Naive thymus-derived CD4-positive, alpha-beta T cell (primary cell): ENCODE measurements at regions of chr11 and their contacts with region 1.

Region 1: DNA sequence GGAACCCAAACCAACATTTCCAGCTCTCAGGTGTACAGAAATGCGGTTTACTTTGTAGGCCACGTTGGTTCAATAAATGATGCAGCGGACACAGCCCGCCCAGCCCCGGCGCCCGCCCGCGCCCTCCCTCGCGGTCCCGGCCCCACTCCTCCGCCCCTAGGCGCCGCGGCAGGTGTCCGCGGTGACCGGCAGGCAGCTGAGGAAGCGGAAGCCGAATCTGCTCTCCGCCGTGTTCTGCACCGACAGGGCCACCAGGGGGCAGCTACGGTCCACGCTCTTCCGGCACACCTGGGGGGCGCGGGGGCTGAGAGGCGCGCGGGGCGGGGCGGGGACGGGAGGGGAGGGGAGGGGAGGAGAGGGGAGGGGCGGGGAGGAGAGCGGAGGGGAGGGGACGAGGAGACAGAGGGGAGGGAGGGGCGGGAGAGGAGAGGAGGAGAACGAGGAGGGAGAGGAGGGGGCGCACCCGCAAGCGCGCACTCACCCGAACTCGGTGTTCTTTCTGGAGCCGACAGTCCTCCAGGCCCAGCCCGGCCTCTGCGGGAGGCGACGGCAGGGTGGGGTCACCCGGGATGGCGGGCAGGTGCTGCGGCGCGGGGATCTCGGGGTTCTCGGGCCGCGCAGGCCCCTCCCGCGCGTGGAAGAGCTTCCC is 5.6 kb downstream of the LMNTD2 start:
- DNase-seq: peak; percentile 60 to 80 (median 72)
- ATAC-seq: peak; percentile 89
- H3K4me3 ChIP-seq: peak overlapping the region; percentile 46
- H3K4me3 Mint-ChIP-seq: peak overlapping the region in 7 of 10 donors; percentile 36 to 69 (median 57)
- H3K27ac ChIP-seq: peak overlapping the region; percentile 44
- H3K27ac Mint-ChIP-seq: no peak overlapping the region
- H3K4me1 ChIP-seq: peaks cover 9 to 16% of the 10 kb centered on the region in 2 donors
- H3K4me1 Mint-ChIP-seq: peaks cover 3 to 8% (median 7%) of the 10 kb centered on the region in 7 donors
- H3K27me3 ChIP-seq: no peaks in the 10 kb centered on the region
- H3K27me3 Mint-ChIP-seq: peaks cover 0 to 18% (median 0%) of the 10 kb centered on the region in 5 donors

Region 2: GRCh38 chr11:269146-269890 is 285.6 kb before region 1 on chr11:
- CTCF ChIA-PET with region 1: no interaction called
- POLR2A ChIA-PET with region 1: no interaction called
- intact Hi-C with region 1: no loop called
- DNase-seq: peak; percentile 43 to 95 (median 88)
- ATAC-seq: peak; percentile 84
- H3K4me3 ChIP-seq: peak overlapping the region; percentile 59
- H3K4me3 Mint-ChIP-seq: peak overlapping the region; percentile 85 to 96 (median 90)
- H3K27ac ChIP-seq: peak overlapping the region; percentile 80
- H3K27ac Mint-ChIP-seq: peak overlapping the region; percentile 92 to 100 (median 99)
- H3K4me1 ChIP-seq: peaks cover 24 to 26% of the 10 kb centered on the region in 2 donors
- H3K4me1 Mint-ChIP-seq: peaks cover 20 to 47% (median 35%) of the 10 kb centered on the region in 7 donors
- H3K27me3 ChIP-seq: no peaks in the 10 kb centered on the region
- H3K27me3 Mint-ChIP-seq: peaks cover 0 to 8% (median 0%) of the 10 kb centered on the region in 5 donors

Region 3: GRCh38 chr11:568306-569157 is 13.6 kb after region 1 on chr11:
- CTCF ChIA-PET with region 1: interaction called, 3 read pairs
- POLR2A ChIA-PET with region 1: interaction called, 17 read pairs
- intact Hi-C with region 1: loop called (anchors 1 kb)
- DNase-seq: peak; percentile 87 to 99 (median 95)
- ATAC-seq: peak; percentile 95
- H3K4me3 ChIP-seq: peak overlapping the region; percentile 73
- H3K4me3 Mint-ChIP-seq: peak overlapping the region; percentile 69 to 84 (median 77)
- H3K27ac ChIP-seq: peak overlapping the region; percentile 65
- H3K27ac Mint-ChIP-seq: peak overlapping the region in 3 of 9 donors; percentile 40 to 82 (median 68)
- H3K4me1 ChIP-seq: peaks cover 6 to 8% of the 10 kb centered on the region in 2 donors
- H3K4me1 Mint-ChIP-seq: peaks cover 0 to 16% (median 3%) of the 10 kb centered on the region in 7 donors
- H3K27me3 ChIP-seq: no peaks in the 10 kb centered on the region
- H3K27me3 Mint-ChIP-seq: no peaks in the 10 kb centered on the region

Region 4: GRCh38 chr11:587978-588380 is 33.0 kb after region 1 on chr11:
- CTCF ChIA-PET with region 1: interaction called, 3 read pairs
- POLR2A ChIA-PET with region 1: interaction called, 5 read pairs
- intact Hi-C with region 1: loop called in 1 of 2 experiments (anchors 1 kb)
- DNase-seq: peak; percentile 34 to 91 (median 78)
- ATAC-seq: peak; percentile 93
- H3K4me3 ChIP-seq: peak overlapping the region; percentile 16
- H3K4me3 Mint-ChIP-seq: peak overlapping the region; percentile 63 to 90 (median 76)
- H3K27ac ChIP-seq: peak overlapping the region; percentile 65
- H3K27ac Mint-ChIP-seq: peak overlapping the region; percentile 95 to 100 (median 99)
- H3K4me1 ChIP-seq: peaks cover 10 to 12% of the 10 kb centered on the region in 2 donors
- H3K4me1 Mint-ChIP-seq: peaks cover 9 to 38% (median 29%) of the 10 kb centered on the region in 7 donors
- H3K27me3 ChIP-seq: no peaks in the 10 kb centered on the region
- H3K27me3 Mint-ChIP-seq: no peaks in the 10 kb centered on the region

Region 5: GRCh38 chr11:615504-616319 is 60.8 kb after region 1 on chr11 and contains the start of gene IRF7:
- CTCF ChIA-PET with region 1: no interaction called
- POLR2A ChIA-PET with region 1: interaction called, 3 read pairs
- intact Hi-C with region 1: loop called (anchors 1 to 2 kb)
- DNase-seq: peak; percentile 70 to 91 (median 76)
- ATAC-seq: peak; percentile 91
- H3K4me3 ChIP-seq: peak within 1 kb of the TSS; percentile 97
- H3K4me3 Mint-ChIP-seq: peak within 1 kb of the TSS; percentile 80 to 94 (median 92)
- H3K27ac ChIP-seq: peak within 1 kb of the TSS; percentile 95
- H3K27ac Mint-ChIP-seq: peak within 1 kb of the TSS; percentile 83 to 97 (median 93)
- H3K4me1 ChIP-seq: peaks cover 8 to 22% of the 10 kb centered on the region in 2 donors
- H3K4me1 Mint-ChIP-seq: peaks cover 0 to 22% (median 15%) of the 10 kb centered on the region in 7 donors
- H3K27me3 ChIP-seq: no peaks in the 10 kb centered on the region
- H3K27me3 Mint-ChIP-seq: no peaks in the 10 kb centered on the region
- total RNA-seq, gene IRF7: 57.0 to 134 (median 64.6) TPM

Region 6: DNA sequence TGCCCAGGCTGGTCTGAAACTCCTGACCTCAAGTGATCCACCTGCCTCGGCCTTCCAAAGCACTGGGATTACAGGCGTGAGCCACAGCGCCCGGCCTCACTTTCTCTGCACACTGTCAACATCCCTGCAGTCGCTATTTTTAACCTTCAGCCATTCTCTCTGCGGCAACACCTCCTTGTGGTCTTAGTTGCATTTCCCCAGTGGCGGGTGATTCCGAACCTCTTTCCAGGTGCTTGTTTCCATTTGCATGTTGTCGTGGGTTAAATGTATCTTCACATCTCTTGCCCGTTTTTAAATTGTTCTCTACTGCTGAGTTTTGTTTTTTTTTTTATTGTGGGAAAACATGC is 74.3 kb after region 1 on chr11:
- CTCF ChIA-PET with region 1: interaction called, 5 read pairs
- POLR2A ChIA-PET with region 1: interaction called, 3 read pairs
- intact Hi-C with region 1: loop called in 1 of 2 experiments (anchors 1 kb)
- DNase-seq: peak in 1 of 9 donors; percentile 17
- ATAC-seq: peak; percentile 48
- H3K4me3 ChIP-seq: no peak overlapping the region
- H3K4me3 Mint-ChIP-seq: peak overlapping the region; percentile 26 to 72 (median 56)
- H3K27ac ChIP-seq: no peak overlapping the region
- H3K27ac Mint-ChIP-seq: peak overlapping the region in 3 of 9 donors; percentile 11 to 34 (median 14)
- H3K4me1 ChIP-seq: peaks cover 0 to 7% of the 10 kb centered on the region in 2 donors
- H3K4me1 Mint-ChIP-seq: peaks cover 17 to 23% (median 20%) of the 10 kb centered on the region in 7 donors
- H3K27me3 ChIP-seq: no peaks in the 10 kb centered on the region
- H3K27me3 Mint-ChIP-seq: peaks cover 21 to 23% (median 22%) of the 10 kb centered on the region in 5 donors

Region 7: GRCh38 chr11:765025-765801 is 210.3 kb after region 1 on chr11:
- CTCF ChIA-PET with region 1: no interaction called
- POLR2A ChIA-PET with region 1: interaction called, 4 read pairs
- intact Hi-C with region 1: loop called in 1 of 2 experiments (anchors 1 kb)
- DNase-seq: peak; percentile 47 to 74 (median 68)
- ATAC-seq: peak; percentile 92
- H3K4me3 ChIP-seq: no peak overlapping the region
- H3K4me3 Mint-ChIP-seq: no peak overlapping the region
- H3K27ac ChIP-seq: no peak overlapping the region
- H3K27ac Mint-ChIP-seq: peak overlapping the region in 5 of 9 donors; percentile 40 to 85 (median 64)
- H3K4me1 ChIP-seq: no peaks in the 10 kb centered on the region
- H3K4me1 Mint-ChIP-seq: peaks cover 0 to 7% (median 0%) of the 10 kb centered on the region in 7 donors
- H3K27me3 ChIP-seq: no peaks in the 10 kb centered on the region
- H3K27me3 Mint-ChIP-seq: no peaks in the 10 kb centered on the region